Activated CD4-positive, alpha-beta T cell treated with anti-CD3 and anti-CD28 coated beads for 36 hours (primary cell): ENCODE measurements at regions of chr12 and their contacts with region 1.

Region 1: GRCh38 chr12:31783996-31784645 is 55.3 kb upstream of the AMN1 start:
- DNase-seq: no peak
- ATAC-seq: no peak
- H3K4me3 Mint-ChIP-seq: no peak overlapping the region
- H3K27ac Mint-ChIP-seq: no peak overlapping the region
- H3K4me1 Mint-ChIP-seq: no peaks in the 10 kb centered on the region
- H3K27me3 Mint-ChIP-seq: no peaks in the 10 kb centered on the region

Region 2: DNA sequence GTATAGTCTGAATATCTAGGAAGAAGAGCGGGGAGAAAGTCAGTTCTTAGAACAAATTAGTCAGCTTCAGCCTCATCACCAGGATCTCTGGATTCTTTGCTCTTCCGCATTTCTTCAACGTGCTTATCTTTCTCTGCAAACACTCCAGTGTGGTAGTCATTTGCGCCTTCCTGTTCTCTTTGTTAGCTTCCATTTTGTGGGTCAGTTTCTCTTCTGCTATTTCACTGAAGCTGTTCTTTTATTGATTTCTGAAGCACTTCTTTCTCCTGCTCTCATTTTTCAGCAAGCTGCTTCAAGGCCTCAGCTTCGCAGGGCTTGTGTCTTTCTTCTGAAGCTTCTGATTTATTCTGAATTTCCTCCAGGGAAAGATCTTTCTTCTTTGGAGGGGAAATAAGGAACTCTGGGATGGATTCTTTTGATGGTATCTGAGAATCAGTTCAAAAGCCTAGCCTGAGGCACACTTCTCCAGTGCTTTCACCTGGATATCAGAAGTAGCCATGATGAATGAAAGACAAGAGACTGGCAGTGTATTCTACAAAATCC is 68.8 kb before region 1 on chr12:
- CTCF ChIA-PET with region 1: no interaction called
- POLR2A ChIA-PET with region 1: no interaction called
- intact Hi-C with region 1: no loop called
- DNase-seq: no peak
- ATAC-seq: no peak
- H3K4me3 Mint-ChIP-seq: no peak overlapping the region
- H3K27ac Mint-ChIP-seq: peak overlapping the region; percentile 16
- H3K4me1 Mint-ChIP-seq: peaks cover 7% of the 10 kb centered on the region
- H3K27me3 Mint-ChIP-seq: no peaks in the 10 kb centered on the region

Region 3: DNA sequence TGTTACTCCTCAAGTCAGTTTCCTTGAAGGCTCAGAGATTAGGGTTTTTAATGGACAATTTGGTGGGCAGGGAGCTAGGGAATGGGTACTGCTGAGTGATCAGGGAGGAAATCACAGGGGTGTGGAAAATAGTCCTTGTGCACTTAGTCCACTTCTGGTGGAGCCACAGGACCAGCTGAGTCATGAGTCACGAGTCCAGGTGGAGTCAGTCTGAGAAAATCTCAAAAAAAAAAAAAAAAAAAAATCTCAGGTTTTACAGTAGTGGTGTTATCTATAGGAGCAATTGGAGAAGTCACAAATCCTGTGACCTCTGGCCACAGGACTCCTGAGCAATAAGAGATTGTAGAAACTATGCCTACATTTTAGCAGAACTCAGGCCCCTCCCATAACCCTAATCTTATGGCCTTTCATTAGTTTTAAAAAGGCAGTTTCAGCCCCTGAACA is 27.1 kb before region 1 on chr12:
- CTCF ChIA-PET with region 1: interaction called, 10 read pairs
- POLR2A ChIA-PET with region 1: no interaction called
- intact Hi-C with region 1: no loop called
- DNase-seq: no peak
- ATAC-seq: no peak
- H3K4me3 Mint-ChIP-seq: no peak overlapping the region
- H3K27ac Mint-ChIP-seq: no peak overlapping the region
- H3K4me1 Mint-ChIP-seq: peaks cover 15% of the 10 kb centered on the region
- H3K27me3 Mint-ChIP-seq: no peaks in the 10 kb centered on the region